Heart left ventricle (tissue), 16 donors: ENCODE measurements at regions of chr3 and their contacts with region 1.

Region 1: DNA sequence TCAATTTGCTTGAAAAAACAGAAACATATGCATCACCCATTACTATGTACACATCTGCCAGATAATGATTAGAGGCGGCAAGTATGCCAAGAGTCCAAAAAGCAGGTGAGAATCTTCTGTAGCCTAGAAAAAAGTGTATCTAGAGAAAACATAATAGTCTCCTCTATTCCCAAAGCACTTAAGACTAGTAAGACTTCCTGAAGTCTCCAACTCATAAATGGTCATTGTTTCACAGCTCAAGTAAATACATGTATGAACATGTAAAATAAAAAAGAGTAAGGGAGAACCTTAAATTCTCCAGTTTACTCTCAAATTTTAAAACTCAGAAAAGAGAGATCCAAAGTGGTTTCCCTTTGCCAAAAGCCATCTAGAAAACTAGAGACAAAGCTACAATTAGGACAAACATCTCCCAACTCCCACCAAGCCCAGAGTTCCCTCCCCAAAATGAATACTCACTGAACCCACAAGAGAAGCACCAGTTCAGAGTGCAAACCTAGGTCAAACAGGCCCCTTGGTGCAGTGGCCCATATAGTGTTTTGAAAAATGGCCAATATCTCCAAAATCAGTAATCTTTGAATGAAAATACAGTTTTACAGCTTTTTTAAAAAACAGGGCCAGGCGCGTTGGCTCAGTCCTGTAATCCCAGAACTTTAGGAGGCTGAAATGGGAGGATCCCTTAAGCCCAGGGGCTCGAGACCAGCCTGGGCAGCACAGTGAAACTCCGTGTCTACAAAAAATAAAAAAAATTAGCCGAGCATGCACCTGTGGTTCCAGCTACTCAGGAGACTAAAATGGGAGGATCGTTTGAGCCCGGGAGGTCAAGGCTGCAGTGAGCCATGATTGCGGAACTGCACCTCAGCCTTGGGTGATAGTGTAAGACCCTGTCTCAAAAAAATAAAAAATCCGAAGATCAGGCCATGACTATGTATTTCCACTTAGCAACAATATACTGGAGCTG is 11.0 kb upstream of the MAP4 start:
- DNase-seq: no peak
- ATAC-seq: no peak
- H3K4me3 ChIP-seq: no peak overlapping the region
- H3K27ac ChIP-seq: peak overlapping the region in 1 of 12 donors; percentile 15
- H3K4me1 ChIP-seq: peaks cover 11 to 74% (median 35%) of the 10 kb centered on the region in 12 donors
- H3K27me3 ChIP-seq: no peaks in the 10 kb centered on the region
- CTCF ChIP-seq: no peak
- POLR2A ChIP-seq: no peak

Region 2: DNA sequence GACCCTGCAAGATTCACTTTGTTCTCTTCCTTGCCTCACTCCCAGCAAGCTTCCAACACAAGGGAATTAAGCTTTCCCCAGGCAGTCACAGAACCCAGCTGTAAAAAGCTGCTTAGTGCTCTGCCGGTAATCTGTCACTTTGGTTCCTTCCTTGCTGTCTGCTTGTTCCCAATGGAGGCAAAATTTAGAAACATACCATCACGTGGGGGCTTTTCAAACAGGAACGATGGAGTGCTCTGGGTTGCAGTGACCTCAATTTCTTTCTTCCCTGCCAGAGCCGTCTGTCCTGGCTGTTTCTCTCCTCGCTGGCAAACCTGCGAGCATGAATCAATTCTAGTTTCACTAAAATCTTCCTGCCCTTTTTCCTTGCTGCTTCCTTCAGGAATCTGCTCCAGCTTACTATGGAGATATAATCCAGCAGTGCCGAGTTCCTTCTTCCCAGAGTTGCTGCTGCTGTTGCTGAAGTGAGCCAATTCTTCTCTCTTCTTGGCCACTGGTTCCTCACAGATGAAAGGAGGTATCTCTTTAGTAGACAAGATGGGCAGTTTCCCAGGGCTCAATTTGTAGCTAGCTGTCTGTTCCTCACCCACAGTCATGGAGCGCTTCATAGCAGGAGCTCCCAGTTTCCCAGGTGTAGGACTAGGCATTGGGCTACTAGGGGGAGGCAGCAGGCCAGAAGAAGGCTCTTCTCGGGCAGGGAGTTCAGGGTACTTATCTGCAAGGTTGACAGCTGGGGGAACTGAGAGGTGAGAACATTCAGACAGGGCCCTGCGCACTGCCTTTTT is 136.2 kb before region 1 on chr3:
- intact Hi-C with region 1: no loop called
- DNase-seq: peak in 4 of 5 donors; percentile 54 to 68 (median 64)
- ATAC-seq: peak; percentile 90 to 92 (median 90)
- H3K4me3 ChIP-seq: peak overlapping the region in 1 of 12 donors; percentile 5
- H3K27ac ChIP-seq: peak overlapping the region; percentile 47 to 85 (median 74)
- H3K4me1 ChIP-seq: peaks cover 7 to 86% (median 50%) of the 10 kb centered on the region in 12 donors
- H3K27me3 ChIP-seq: no peaks in the 10 kb centered on the region
- CTCF ChIP-seq: no peak
- POLR2A ChIP-seq: no peak

Region 3: GRCh38 chr3:48047841-48048456 is 20.7 kb after region 1 on chr3:
- intact Hi-C with region 1: loop called in 1 of 10 experiments (anchors 2 kb)
- DNase-seq: no peak
- ATAC-seq: no peak
- H3K4me3 ChIP-seq: no peak overlapping the region
- H3K27ac ChIP-seq: no peak overlapping the region
- H3K4me1 ChIP-seq: peaks cover 0 to 26% (median 5%) of the 10 kb centered on the region in 12 donors
- H3K27me3 ChIP-seq: no peaks in the 10 kb centered on the region
- CTCF ChIP-seq: no peak
- POLR2A ChIP-seq: no peak